ENCODE measurements at regions of chr15 and their contacts with region 1.

Region 1: DNA sequence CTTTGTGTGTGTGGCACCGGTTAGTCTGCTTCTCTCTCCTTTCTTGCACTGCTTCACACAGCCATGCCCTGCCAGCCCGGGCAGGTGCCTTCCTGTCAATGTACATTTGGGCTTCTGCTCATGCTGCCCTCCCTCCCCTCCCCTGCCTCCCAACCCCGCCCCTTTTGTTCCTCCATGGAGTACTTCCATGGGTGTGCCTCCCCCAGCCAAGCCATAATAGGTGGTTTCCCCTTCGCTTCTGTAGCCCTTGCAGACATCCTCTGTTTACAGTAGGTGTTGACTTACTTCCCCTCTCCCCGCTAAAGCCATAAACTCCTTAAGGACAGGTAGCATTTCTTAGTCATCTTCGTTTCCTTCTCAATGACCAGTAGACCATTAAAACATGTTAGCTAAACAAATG is 31.8 kb upstream of the CRTC3 start:
- DNase-seq: no peak
- CTCF ChIP-seq: no peak

Region 2: GRCh38 chr15:90451053-90451850 is 46.7 kb before region 1 on chr15:
- CTCF ChIA-PET with region 1: no interaction called
- POLR2A ChIA-PET with region 1: no interaction called
- DNase-seq: no peak
- CTCF ChIP-seq: no peak

Region 3: DNA sequence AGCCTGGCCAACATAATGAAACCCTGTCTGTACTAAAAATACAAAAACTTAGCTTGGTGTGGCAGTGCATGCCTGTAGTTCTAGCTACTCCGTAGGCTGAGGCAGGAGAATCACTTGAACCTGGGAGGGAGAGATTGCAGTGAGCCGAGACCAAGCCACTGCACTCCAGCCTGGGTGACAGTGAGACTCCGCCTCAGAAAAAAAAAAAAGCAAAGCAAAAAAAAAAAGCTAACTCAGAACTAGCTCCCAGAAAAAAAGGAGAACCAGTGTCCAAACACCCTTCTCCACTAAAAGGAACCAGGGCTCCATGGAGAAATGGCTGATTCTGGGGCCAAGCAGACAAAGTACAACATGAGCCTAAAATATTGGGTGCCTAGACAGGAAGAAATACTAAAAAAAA is 15.1 kb after region 1 on chr15:
- CTCF ChIA-PET with region 1: interaction called, 12 read pairs
- POLR2A ChIA-PET with region 1: no interaction called
- DNase-seq: no peak
- CTCF ChIP-seq: no peak